GM13977 (cell line): ENCODE measurements at regions of chr3 and their contacts with region 1.

Region 1: GRCh38 chr3:109081746-109082510 is 36.0 kb downstream of the MORC1 start:
- DNase-seq: peak; percentile 41
- CTCF ChIP-seq: peak; percentile 78

Region 2: DNA sequence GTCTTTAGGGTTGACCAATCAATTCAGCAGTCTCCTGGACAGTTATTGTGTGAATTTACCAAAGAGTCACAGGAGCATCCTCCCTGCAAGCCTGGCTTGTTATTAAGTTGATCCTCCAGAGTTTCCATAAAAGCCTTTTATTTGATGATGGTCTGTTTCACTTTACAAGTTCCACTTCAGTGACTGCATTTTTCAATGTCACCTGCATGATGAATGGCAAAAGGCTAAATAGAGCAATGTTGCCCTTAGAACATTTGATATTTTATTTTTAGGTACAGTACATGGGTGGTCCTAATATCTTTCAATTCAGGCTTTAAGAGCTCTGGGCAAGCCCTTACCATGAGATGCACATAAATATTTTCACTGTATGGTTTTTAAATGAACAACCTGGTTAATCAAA is 150.9 kb before region 1 on chr3:
- in situ Hi-C with region 1: no loop called
- DNase-seq: no peak
- CTCF ChIP-seq: no peak

Region 3: GRCh38 chr3:109023656-109024254 is 58.2 kb before region 1 on chr3:
- in situ Hi-C with region 1: loop called (anchors 10 kb)
- DNase-seq: peak; percentile 17
- CTCF ChIP-seq: peak; percentile 79